OCI-LY7 (cell line): ENCODE measurements at regions of chrX and their contacts with region 1.

Region 1: DNA sequence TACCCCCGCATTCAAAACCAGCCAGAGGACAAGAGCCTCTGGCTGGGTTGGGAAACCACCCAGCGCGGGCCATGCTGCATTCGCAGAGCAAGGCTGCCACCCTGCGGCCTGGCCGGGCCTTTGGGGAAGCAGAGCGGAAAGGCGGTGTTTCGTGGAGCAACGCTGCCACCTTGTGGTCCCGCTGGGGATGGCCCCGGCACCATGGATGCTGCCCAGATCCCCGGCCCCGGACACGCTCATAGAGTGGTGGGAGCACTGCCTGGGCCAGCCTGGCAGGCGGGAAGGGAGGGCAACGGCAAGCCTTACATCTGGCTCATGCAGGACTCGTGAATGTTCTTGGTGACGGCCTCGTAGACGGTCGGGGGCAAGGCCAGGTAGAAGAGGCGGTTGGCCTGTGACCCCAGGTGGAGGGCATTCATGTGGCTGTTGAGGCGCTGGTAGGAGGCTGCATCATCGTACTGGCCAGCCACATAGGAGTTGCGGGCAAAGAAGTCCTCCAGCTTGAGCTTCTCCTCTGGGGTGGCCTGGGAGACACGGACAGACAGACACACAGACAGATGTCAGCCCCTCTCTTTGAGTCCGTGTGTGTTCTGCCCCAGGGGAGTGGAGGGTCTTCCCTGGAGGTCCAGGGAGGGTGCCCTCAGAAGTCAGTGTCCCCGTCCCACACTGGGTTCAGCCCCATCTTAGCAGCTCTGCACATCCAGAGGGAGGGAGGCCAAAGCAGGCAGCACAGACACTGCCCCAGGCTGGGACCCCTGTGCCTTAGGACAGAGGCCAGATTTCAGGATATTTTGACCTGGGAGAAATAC is 11.6 kb downstream of the G6PD start:
- DNase-seq: peak; percentile 87
- H3K4me3 ChIP-seq: no peak overlapping the region
- H3K27ac ChIP-seq: no peak overlapping the region
- H3K4me1 ChIP-seq: peaks cover 4% of the 10 kb centered on the region
- CTCF ChIP-seq: peak; percentile 90

Region 2: DNA sequence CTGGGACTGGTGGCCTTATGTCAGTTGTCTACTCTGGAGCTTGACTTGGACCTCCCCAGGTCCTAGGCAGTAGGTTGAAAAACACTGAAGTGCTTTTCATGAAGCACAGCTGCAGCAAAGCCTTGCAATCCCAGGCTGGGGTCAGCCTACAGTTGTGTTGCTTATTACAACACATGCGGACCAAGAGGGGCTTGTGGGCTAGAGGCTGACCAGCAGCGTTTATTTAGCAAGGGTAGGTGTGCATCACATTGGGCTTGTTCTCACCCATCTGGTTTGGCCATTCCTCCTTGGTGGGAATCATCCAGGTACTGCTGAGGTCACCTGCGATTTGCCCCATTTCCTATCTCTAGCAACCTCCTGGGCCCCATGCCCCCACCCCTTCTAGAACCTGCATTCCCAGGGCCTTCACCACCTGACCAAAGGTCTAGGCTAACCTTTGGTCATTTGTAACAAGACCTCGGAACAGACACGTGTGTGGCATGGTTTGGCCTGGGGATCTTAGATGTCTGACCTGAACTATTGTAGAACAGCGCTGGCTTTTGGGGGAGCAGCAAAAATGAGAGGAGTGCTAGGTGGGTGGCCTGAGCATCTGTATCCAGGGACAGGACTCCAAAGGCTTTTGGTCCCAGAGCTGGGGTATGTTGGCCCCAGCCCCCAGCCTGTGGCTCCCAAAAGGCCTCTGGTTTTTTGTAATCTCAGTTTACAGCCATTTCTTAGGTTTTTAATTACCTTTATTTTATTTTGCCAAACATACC is 133.8 kb before region 1 on chrX:
- CTCF ChIA-PET with region 1: no interaction called
- POLR2A ChIA-PET with region 1: no interaction called
- intact Hi-C with region 1: loop called (anchors 5 kb)
- DNase-seq: peak; percentile 11
- H3K4me3 ChIP-seq: no peak overlapping the region
- H3K27ac ChIP-seq: peak overlapping the region; percentile 39
- H3K4me1 ChIP-seq: peaks cover 9% of the 10 kb centered on the region
- CTCF ChIP-seq: no peak

Region 3: GRCh38 chrX:154873329-154873728 is 338.3 kb after region 1 on chrX:
- CTCF ChIA-PET with region 1: no interaction called
- POLR2A ChIA-PET with region 1: no interaction called
- intact Hi-C with region 1: no loop called
- DNase-seq: no peak
- H3K4me3 ChIP-seq: no peak overlapping the region
- H3K27ac ChIP-seq: no peak overlapping the region
- H3K4me1 ChIP-seq: no peaks in the 10 kb centered on the region
- CTCF ChIP-seq: no peak